ENCODE measurements at regions of chr9 and their contacts with region 1.

Region 1: GRCh38 chr9:106962615-106963363 is 99.8 kb downstream of the ZNF462 start:
- DNase-seq: peak in 4 of 5 donors; percentile 57 to 73 (median 64)
- ATAC-seq: peak; percentile 90 to 97 (median 92)
- H3K4me3 ChIP-seq: no peak overlapping the region
- H3K27ac ChIP-seq: peak overlapping the region; percentile 31 to 81 (median 67)
- H3K4me1 ChIP-seq: peaks cover 0 to 59% (median 23%) of the 10 kb centered on the region in 12 donors
- H3K27me3 ChIP-seq: no peaks in the 10 kb centered on the region
- CTCF ChIP-seq: no peak
- POLR2A ChIP-seq: no peak

Region 2: GRCh38 chr9:106878924-106879323 is 83.9 kb before region 1 on chr9:
- intact Hi-C with region 1: loop called in 1 of 10 experiments (anchors 5 kb)
- DNase-seq: peak; percentile 74 to 89 (median 80)
- ATAC-seq: peak; percentile 91 to 96 (median 94)
- H3K4me3 ChIP-seq: no peak overlapping the region
- H3K27ac ChIP-seq: peak overlapping the region; percentile 11 to 78 (median 69)
- H3K4me1 ChIP-seq: peaks cover 0 to 88% (median 58%) of the 10 kb centered on the region in 12 donors
- H3K27me3 ChIP-seq: no peaks in the 10 kb centered on the region
- CTCF ChIP-seq: no peak
- POLR2A ChIP-seq: no peak

Measured in heart left ventricle (tissue), 16 donors.